Motor neuron (in vitro differentiated cells): ENCODE measurements at regions of chr11 and their contacts with region 1.

Region 1: DNA sequence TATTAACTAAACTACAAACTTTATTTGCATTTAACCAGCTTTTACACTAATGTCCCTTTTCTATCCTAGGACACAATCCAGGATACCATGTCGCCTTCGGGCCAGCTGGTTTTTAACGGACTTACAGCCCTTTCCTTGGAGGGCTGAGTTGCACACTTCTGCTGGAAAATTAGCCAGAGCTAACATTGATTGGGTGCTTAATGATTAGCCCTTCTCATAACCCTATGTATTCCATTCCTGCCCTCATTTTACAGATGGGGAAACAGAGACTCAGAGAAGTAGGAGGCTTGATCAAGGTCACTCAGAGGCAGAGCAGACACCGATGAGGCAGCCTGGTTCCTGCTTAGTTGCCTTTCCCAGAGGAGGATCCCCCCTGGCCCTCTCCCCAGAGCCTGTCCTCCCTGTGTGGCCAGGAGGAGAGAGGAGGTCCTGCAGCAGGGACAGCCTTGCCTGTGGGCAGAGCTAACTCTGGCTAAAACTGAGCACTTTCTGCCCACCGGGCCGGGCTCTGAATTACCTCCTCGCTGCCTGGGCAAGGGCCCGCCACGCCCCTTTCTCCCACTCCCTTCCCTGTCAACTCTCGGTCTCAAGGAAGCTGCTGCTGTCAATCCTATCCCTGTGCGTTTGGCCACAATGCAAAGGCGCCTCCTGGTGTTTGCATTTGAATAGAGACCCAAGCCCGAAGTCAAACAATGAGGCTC is 59.6 kb upstream of the PAX6 start:
- ATAC-seq: peak; percentile 59 to 76 (median 69)
- H3K4me3 ChIP-seq: no peak overlapping the region
- H3K27ac ChIP-seq: no peak overlapping the region
- H3K4me1 ChIP-seq: peaks cover 12 to 19% of the 10 kb centered on the region in 2 donors

Region 2: GRCh38 chr11:30960387-30960992 is 910.3 kb before region 1 on chr11:
- in situ Hi-C with region 1: loop called in 1 of 9 experiments (anchors 25 kb)
- ATAC-seq: peak in 5 of 8 experiments; percentile 32 to 80 (median 59)
- H3K4me3 ChIP-seq: no peak overlapping the region
- H3K27ac ChIP-seq: no peak overlapping the region
- H3K4me1 ChIP-seq: no peaks in the 10 kb centered on the region

Region 3: GRCh38 chr11:31397239-31397834 is 473.4 kb before region 1 on chr11:
- in situ Hi-C with region 1: loop called in 1 of 9 experiments (anchors 25 kb)
- ATAC-seq: peak in 1 of 8 experiments; percentile 24
- H3K4me3 ChIP-seq: no peak overlapping the region
- H3K27ac ChIP-seq: no peak overlapping the region
- H3K4me1 ChIP-seq: peaks cover 0 to 3% of the 10 kb centered on the region in 2 donors

Region 4: GRCh38 chr11:31487848-31488247 is 382.9 kb before region 1 on chr11:
- in situ Hi-C with region 1: loop called in 2 of 9 experiments (anchors 10 to 25 kb)
- ATAC-seq: peak in 3 of 8 experiments; percentile 26 to 38 (median 37)
- H3K4me3 ChIP-seq: no peak overlapping the region
- H3K27ac ChIP-seq: no peak overlapping the region
- H3K4me1 ChIP-seq: no peaks in the 10 kb centered on the region

Region 5: GRCh38 chr11:31676280-31676982 is 194.3 kb before region 1 on chr11:
- in situ Hi-C with region 1: no loop called
- ATAC-seq: no peak
- H3K4me3 ChIP-seq: no peak overlapping the region
- H3K27ac ChIP-seq: no peak overlapping the region
- H3K4me1 ChIP-seq: no peaks in the 10 kb centered on the region

Region 6: DNA sequence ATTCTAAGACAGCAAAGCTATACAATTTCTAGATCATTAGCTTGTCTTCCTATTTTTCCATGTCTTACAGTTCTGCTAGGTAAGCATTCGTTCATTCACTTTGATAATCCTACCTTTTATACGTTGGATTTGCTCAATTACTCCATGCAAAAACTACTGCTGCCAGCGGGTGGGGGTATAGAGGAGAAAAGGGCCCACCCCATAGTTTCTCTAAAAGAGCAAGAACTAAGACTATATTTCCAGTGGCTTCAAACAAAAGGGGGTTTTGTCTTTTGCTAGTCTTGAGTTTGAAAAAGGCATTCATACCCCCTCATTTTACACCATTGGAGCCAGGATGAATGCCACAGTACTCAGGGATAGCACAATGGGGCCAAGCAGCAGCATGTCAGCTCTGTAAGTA is 408.9 kb after region 1 on chr11:
- in situ Hi-C with region 1: no loop called
- ATAC-seq: no peak
- H3K4me3 ChIP-seq: no peak overlapping the region
- H3K27ac ChIP-seq: no peak overlapping the region
- H3K4me1 ChIP-seq: no peaks in the 10 kb centered on the region